Tibial artery (tissue), 4 donors: ENCODE measurements at regions of chr9 and their contacts with region 1.

Region 1: DNA sequence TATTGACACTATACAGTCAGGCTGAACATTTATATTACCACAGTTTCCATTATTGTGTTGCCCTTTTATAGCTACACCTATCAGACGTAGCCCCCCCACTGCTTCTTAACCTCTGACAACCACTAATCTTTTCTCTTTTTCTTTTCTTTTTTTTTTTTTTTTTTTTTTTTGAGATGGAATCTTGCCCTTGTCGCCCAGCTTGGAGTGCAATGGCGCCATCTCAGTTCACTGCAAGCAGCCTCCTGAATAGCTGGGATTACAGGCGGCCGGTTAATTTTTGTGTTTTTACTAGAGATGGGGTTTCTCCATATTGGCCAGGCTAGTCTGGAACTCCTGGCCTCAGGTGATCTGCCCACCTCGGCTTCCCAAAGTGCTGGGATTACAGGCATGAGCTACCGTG is 75.4 kb downstream of the UHRF2 start:
- DNase-seq: no peak
- H3K4me3 ChIP-seq: no peak overlapping the region
- H3K27ac ChIP-seq: no peak overlapping the region
- H3K4me1 ChIP-seq: no peaks in the 10 kb centered on the region
- H3K27me3 ChIP-seq: no peaks in the 10 kb centered on the region
- CTCF ChIP-seq: no peak

Region 2: DNA sequence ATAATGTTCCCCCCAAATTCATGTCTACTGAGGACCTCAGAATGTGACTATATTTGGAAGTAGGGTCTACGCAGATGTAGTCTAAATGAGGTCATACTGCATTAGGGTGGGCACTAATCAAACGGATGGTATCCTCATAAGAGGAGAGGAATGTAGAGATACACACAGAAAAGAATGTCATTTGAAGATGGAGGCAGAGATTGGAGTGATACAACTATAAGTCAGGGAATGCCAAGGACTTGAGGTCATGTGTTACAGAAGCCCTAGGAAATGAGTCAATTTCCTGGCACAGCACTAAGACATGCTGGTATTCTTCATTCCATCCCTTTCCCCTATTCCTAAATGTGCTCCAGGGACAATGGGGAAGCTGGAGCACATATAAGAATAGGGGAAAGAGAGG is 978.8 kb before region 1 on chr9:
- intact Hi-C with region 1: loop called (anchors 5 kb)
- DNase-seq: no peak
- H3K4me3 ChIP-seq: no peak overlapping the region
- H3K27ac ChIP-seq: peak overlapping the region; percentile 60 to 69
- H3K4me1 ChIP-seq: peaks cover 0 to 30% (median 12%) of the 10 kb centered on the region in 4 donors
- H3K27me3 ChIP-seq: no peaks in the 10 kb centered on the region
- CTCF ChIP-seq: no peak